HEK293T (cell line): ENCODE measurements at regions of chr19 and their contacts with region 1.

Region 1: DNA sequence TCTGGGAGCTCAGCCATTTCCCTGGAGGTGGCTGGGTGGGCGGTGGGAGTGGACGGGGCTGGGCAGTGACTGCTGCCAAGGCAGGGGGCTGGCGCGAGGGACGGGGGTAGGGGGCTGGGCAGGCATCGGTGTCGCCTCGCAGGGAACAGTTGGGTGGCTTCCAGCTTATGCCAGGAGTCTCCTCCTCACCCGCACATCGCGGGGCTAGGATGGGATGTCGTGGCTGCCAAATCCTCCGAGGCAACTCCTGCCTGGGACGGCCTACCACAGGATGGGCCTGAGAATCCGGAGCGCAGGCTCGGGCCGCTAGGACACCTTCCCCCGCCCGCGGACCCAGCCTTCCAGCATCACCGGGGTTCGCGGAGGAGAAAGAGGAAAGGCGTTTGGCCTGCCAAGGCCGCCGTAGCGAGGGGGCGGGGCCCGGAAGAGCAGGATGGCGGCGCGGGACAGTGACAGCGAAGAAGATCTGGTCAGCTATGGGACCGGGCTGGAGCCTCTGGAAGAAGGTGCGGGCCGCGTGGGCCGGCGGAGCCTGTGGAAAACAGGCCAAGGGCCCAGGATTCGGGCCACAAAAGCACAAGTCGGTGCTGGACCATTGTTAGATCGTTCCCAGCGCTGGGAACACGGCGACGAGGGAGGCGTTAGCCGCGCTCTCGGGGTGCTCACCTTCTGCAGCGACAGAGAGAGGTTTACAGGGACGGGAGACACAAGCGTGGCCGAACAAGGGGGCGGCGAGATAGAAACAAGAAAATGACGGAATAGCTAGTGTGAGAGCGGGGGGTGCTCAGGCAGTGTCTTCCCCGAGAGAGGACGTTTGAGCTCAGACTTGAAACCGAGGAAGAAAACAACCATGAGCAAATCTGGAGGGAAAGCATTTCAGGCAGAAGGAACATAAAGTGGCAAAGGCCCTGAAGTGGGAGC is at the start of gene GPATCH1:
- DNase-seq: peak; percentile 88

Region 2: DNA sequence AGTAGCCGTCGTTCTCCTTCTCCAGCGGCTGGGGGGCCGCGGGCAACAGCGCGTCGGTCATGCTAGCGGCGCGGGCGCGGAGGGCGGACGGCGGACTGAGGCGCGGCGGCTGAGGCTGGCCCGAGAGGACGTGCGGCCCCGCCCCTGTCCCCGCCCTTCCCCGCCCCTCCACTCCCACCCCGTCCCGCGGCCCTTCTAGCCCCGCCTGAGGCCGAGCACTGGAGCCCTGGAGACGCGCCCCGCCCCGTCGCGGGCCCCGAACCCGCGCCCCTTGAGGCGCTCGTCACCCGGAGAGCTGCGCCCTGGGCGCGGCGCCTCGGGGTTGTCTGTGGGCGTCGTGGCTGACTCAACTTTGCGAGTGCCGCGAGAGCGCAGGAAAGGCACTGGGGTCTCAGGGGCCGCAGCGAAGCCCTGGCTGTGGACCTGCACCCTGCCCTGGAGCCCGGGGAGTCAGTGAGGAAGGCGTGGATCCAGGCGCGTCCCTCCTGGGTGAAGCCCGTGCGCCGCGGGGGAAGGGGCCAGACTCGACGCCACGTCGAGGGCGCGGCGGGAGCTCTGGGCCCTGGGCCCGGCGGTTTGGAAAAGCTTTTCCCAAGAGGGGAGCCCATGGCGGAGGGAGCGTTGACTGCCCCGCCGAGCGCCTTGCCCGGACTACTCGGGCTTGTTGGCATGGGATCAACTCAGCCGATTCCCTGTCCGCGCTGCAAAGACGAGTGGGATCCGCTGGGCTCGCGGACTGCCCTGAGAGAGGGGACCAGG is 16.1 kb before region 1 on chr19 and contains the start of gene RHPN2:
- CTCF ChIA-PET with region 1: no interaction called
- POLR2A ChIA-PET with region 1: interaction called, 12 read pairs
- DNase-seq: peak; percentile 90